IMR-90 (cell line): ENCODE measurements at regions of chr3 and their contacts with region 1.

Region 1: GRCh38 chr3:57755668-57756527 is at the start of gene SLMAP:
- DNase-seq: peak; percentile 96
- ATAC-seq: peak; percentile 95
- H3K4me3 ChIP-seq: peak within 1 kb of the TSS; percentile 84
- H3K27ac ChIP-seq: peak within 1 kb of the TSS; percentile 88
- H3K4me1 ChIP-seq: peaks cover 4% of the 10 kb centered on the region
- H3K27me3 ChIP-seq: no peaks in the 10 kb centered on the region
- CTCF ChIP-seq: no peak
- POLR2A ChIP-seq: peak; percentile 68; the same call in 1 of the 2 replicates
- RAD21 ChIP-seq: no peak
- total RNA-seq, gene SLMAP: 26.5 and 32.2 TPM in 2 replicates

Region 2: GRCh38 chr3:57597122-57597923 is 158.6 kb before region 1 on chr3 and contains the start of gene ARF4:
- CTCF ChIA-PET with region 1: no interaction called
- POLR2A ChIA-PET with region 1: no interaction called
- dilution Hi-C with region 1: no loop called
- in situ Hi-C with region 1: no loop called
- intact Hi-C with region 1: loop called (anchors 2 kb)
- DNase-seq: peak; percentile 99
- ATAC-seq: peak; percentile 89
- H3K4me3 ChIP-seq: peak within 1 kb of the TSS; percentile 80
- H3K27ac ChIP-seq: peak within 1 kb of the TSS; percentile 96
- H3K4me1 ChIP-seq: peaks cover 6% of the 10 kb centered on the region
- H3K27me3 ChIP-seq: no peaks in the 10 kb centered on the region
- CTCF ChIP-seq: peak; percentile 44
- POLR2A ChIP-seq: peak; percentile 99
- RAD21 ChIP-seq: no peak
- total RNA-seq, gene ARF4: 172 and 290 TPM in 2 replicates

Region 3: GRCh38 chr3:57692259-57693147 is 63.4 kb before region 1 on chr3 and contains the start of gene DENND6A:
- CTCF ChIA-PET with region 1: no interaction called
- POLR2A ChIA-PET with region 1: no interaction called
- dilution Hi-C with region 1: no loop called
- in situ Hi-C with region 1: no loop called
- intact Hi-C with region 1: loop called (anchors 1 kb)
- DNase-seq: peak; percentile 86
- ATAC-seq: peak; percentile 96
- H3K4me3 ChIP-seq: peak within 1 kb of the TSS; percentile 77
- H3K27ac ChIP-seq: peak within 1 kb of the TSS; percentile 81
- H3K4me1 ChIP-seq: no peaks in the 10 kb centered on the region
- H3K27me3 ChIP-seq: no peaks in the 10 kb centered on the region
- CTCF ChIP-seq: no peak
- POLR2A ChIP-seq: peak; percentile 80
- RAD21 ChIP-seq: no peak
- total RNA-seq, gene DENND6A: 9.0 and 10.3 TPM in 2 replicates

Region 4: DNA sequence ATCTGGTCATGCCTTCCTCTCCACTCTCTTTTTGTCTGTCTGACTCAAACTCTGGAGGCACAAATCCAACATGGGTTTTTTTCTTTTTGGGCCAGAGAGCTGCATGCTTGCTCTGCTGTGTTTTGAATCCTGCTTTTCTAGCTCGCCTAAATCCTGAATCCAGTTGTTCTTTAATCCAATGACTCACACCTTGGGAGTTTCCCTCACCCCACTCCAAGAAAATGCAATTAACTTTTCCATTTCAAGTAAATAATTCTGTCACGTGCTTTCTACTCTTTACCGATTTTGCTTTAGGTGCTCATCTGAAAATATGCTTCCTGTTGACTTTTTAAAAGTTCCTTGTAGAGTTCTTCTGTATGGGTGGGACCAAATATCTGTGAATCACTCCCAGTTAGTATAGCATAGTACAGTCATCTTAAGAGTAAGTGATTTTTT is 47.8 kb after region 1 on chr3:
- CTCF ChIA-PET with region 1: no interaction called
- POLR2A ChIA-PET with region 1: no interaction called
- dilution Hi-C with region 1: no loop called
- in situ Hi-C with region 1: no loop called
- intact Hi-C with region 1: loop called (anchors 5 kb)
- DNase-seq: peak; percentile 97
- ATAC-seq: peak; percentile 94
- H3K4me3 ChIP-seq: no peak overlapping the region
- H3K27ac ChIP-seq: no peak overlapping the region
- H3K4me1 ChIP-seq: no peaks in the 10 kb centered on the region; the same call in 1 of the 2 replicates
- H3K27me3 ChIP-seq: no peaks in the 10 kb centered on the region
- CTCF ChIP-seq: no peak
- POLR2A ChIP-seq: no peak
- RAD21 ChIP-seq: no peak

Region 5: GRCh38 chr3:57826245-57826951 is 70.5 kb after region 1 on chr3:
- CTCF ChIA-PET with region 1: no interaction called
- POLR2A ChIA-PET with region 1: no interaction called
- dilution Hi-C with region 1: no loop called
- in situ Hi-C with region 1: no loop called
- intact Hi-C with region 1: loop called (anchors 5 kb)
- DNase-seq: no peak
- ATAC-seq: no peak
- H3K4me3 ChIP-seq: no peak overlapping the region
- H3K27ac ChIP-seq: no peak overlapping the region
- H3K4me1 ChIP-seq: peaks cover 6% of the 10 kb centered on the region
- H3K27me3 ChIP-seq: no peaks in the 10 kb centered on the region
- CTCF ChIP-seq: peak; percentile 36
- POLR2A ChIP-seq: no peak
- RAD21 ChIP-seq: peak; percentile 51